Motor neuron (in vitro differentiated cells): ENCODE measurements at regions of chr12 and their contacts with region 1.

Region 1: DNA sequence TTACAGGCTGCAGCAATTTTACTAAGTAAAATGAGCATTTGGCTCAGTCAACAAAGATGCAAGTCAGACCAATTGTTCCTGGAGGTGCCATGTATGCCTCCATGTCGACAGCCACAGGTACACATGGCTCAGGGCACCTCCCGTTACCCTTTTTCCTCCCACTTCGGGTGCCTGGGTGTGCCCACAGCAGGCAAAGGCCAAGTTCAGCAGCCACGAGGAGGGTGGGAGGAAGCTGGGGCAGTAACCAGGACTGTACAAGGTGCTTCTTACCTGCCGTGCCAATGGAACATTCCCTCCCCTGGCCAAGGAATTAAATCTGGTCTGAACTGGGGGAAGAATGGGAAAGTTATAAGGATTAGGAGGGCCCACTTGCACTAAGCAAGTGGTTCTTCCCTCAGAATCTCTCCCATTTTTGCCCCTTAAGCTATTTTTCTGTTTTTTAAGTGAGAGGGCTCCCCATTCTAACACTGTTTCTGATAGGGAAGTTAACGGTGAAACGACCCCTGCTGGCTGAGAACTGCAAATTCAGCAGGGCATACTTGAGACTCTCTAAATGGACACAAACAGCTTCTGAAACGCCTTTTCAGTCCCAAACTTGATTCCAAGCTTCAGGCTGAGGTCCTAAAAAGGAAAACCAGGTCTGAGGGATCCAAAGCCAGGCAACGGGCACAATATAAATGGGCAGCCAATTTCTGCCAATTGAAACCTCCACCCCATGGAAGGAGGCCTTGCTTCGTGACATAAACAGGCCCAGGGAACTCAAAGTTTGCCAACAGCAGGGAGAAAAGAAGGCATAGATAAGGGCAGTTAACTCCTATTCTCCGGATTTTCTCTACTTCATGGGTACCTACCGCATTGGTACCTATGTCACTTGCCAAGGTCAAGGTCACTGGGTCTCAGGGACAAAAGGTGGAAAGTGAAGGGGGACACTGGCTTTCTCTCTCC is 24.8 kb downstream of the CLECL1 start:
- ATAC-seq: peak in 5 of 8 experiments; percentile 39 to 78 (median 74)
- H3K4me3 ChIP-seq: no peak overlapping the region
- H3K27ac ChIP-seq: no peak overlapping the region
- H3K4me1 ChIP-seq: no peaks in the 10 kb centered on the region

Region 2: GRCh38 chr12:9169979-9170634 is 538.0 kb before region 1 on chr12:
- in situ Hi-C with region 1: no loop called
- ATAC-seq: no peak
- H3K4me3 ChIP-seq: no peak overlapping the region
- H3K27ac ChIP-seq: no peak overlapping the region
- H3K4me1 ChIP-seq: no peaks in the 10 kb centered on the region

Region 3: DNA sequence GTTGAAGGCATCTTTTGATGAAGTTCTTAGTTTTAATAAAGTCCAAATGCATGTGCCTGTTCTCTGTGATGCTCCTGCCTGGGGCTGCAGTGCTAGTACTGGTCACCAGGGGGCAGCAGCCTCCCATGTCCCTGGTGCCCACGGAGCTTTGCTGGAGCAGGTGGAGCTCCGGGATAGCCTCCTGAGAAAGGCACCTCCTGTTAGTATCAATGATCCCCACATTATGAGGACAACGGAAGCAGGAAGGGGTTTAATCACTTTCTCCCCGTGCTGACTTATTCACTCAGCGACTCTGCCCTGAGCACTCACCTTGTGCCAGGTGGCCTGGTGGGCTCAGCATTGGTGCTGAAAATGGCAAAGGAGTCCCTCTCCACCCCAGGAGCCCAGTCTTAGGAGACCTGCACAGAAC is 376.9 kb before region 1 on chr12:
- in situ Hi-C with region 1: loop called in 2 of 9 experiments (anchors 25 kb)
- ATAC-seq: peak; percentile 75 to 94 (median 80)
- H3K4me3 ChIP-seq: no peak overlapping the region
- H3K27ac ChIP-seq: no peak overlapping the region
- H3K4me1 ChIP-seq: peaks cover 0 to 6% of the 10 kb centered on the region in 2 donors

Region 4: GRCh38 chr12:9634177-9634803 is 73.8 kb before region 1 on chr12:
- in situ Hi-C with region 1: loop called in 1 of 9 experiments (anchors 10 kb)
- ATAC-seq: peak in 3 of 8 experiments; percentile 22 to 58 (median 47)
- H3K4me3 ChIP-seq: no peak overlapping the region
- H3K27ac ChIP-seq: no peak overlapping the region
- H3K4me1 ChIP-seq: no peaks in the 10 kb centered on the region